Sciatic nerve (tissue), 2 donors: ENCODE measurements at regions of chr5 and their contacts with region 1.

Region 1: DNA sequence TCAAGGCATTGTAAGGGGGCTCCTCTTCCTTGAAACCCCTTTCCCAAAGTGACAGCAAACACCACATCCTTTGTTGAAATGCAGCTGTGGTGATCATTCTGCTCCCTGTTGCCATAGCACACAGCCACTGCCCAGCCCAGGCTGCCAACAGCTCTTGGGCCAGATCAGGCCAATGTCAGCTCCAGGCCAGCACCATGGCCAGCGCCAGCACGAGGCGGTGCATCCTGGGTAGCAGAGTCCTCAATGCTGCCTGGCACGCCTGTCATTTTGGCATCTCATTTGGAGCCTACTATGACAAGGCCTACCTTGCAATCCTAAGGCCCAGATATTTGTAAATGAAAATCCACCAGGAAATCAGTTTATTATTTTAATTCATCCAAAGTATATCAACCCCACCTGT is 390.6 kb downstream of the DNAH5 start:
- DNase-seq: no peak
- ATAC-seq: no peak

Region 2: DNA sequence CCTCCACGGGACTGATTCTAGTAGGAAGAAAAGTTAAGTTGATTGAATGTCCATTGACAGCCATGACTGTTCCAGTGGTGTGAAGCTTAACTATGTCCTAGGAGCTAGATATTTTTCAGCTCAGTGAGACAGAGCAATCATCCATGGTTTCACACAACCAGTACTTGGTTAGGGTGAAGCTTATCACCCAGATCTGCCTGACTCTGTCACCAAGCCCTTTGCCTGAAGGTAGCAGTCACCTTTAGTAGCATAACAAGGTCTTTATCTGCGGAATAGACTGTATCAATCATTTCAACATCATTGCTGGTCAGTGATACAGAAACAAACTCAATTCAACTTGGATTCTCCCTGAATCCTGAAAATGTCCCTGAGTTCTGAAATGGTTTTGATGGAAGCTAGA is 1556.4 kb after region 1 on chr5:
- intact Hi-C with region 1: loop called (anchors 5 kb)
- DNase-seq: no peak
- ATAC-seq: no peak